Panc1 (cell line): ENCODE measurements at regions of chr5 and their contacts with region 1.

Region 1: DNA sequence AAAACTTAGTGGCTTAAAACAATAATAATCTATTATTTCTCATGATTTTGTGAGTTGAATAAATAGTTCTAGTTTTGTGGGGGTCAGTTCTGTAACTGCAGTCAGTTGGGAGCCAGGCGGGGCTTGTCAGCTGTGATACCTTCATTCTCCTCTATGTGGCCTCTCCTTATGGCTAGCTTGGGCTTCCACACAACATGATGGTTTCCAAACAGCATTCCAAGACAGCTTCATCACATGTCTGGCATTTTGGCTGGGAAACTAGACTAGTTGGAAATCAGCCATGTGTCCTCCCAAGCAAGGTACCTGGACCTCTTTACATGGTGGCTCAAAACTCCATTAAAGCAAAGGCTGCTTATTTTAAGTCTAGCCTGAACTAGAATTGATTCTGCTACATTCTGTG is 61.4 kb upstream of the RANBP3L start:
- DNase-seq: no peak
- ATAC-seq: no peak
- H3K4me3 ChIP-seq: no peak overlapping the region
- H3K27ac ChIP-seq: no peak overlapping the region
- H3K4me1 ChIP-seq: no peaks in the 10 kb centered on the region
- H3K27me3 ChIP-seq: no peaks in the 10 kb centered on the region
- CTCF ChIP-seq: no peak

Region 2: GRCh38 chr5:36389245-36389644 is 26.1 kb after region 1 on chr5:
- CTCF ChIA-PET with region 1: no interaction called
- POLR2A ChIA-PET with region 1: interaction called, 11 read pairs
- in situ Hi-C with region 1: no loop called
- intact Hi-C with region 1: no loop called
- DNase-seq: no peak
- ATAC-seq: no peak
- H3K4me3 ChIP-seq: no peak overlapping the region
- H3K27ac ChIP-seq: no peak overlapping the region
- H3K4me1 ChIP-seq: no peaks in the 10 kb centered on the region
- H3K27me3 ChIP-seq: peaks cover 2% of the 10 kb centered on the region; the same call in 1 of the 2 replicates
- CTCF ChIP-seq: no peak